ENCODE measurements at regions of chr2 and their contacts with region 1.

Region 1: DNA sequence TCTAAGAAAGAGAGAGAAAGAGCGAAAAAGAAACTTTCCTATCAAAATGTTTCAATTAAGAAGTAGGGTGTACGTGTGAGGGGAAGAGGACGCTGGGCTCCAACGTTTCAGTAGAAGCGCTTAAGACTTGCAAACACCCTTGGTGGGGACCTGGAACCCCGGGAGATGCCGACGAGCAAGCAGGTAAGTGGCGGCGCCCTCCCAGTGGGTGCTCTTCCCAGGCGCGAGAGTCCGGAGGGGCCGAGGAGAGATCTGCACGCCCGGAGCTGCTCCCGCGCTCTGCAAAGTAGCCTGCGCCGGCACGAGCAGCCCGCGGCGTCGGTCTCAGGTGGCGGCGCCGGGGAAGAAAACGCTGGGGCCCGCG is 678 bp upstream of the OTX1 start:
- DNase-seq: peak in 1 of 2 experiments; percentile 63
- H3K4me3 ChIP-seq: peak overlapping the region; percentile 66
- H3K4me1 ChIP-seq: peaks cover 7% of the 10 kb centered on the region
- H3K27me3 ChIP-seq: no peaks in the 10 kb centered on the region

Region 2: GRCh38 chr2:62456721-62457539 is 593.0 kb before region 1 on chr2:
- in situ Hi-C with region 1: loop called (anchors 25 kb)
- DNase-seq: peak; percentile 79 to 91
- H3K4me3 ChIP-seq: peak overlapping the region; percentile 29
- H3K4me1 ChIP-seq: peaks cover 17% of the 10 kb centered on the region
- H3K27me3 ChIP-seq: no peaks in the 10 kb centered on the region

Region 3: DNA sequence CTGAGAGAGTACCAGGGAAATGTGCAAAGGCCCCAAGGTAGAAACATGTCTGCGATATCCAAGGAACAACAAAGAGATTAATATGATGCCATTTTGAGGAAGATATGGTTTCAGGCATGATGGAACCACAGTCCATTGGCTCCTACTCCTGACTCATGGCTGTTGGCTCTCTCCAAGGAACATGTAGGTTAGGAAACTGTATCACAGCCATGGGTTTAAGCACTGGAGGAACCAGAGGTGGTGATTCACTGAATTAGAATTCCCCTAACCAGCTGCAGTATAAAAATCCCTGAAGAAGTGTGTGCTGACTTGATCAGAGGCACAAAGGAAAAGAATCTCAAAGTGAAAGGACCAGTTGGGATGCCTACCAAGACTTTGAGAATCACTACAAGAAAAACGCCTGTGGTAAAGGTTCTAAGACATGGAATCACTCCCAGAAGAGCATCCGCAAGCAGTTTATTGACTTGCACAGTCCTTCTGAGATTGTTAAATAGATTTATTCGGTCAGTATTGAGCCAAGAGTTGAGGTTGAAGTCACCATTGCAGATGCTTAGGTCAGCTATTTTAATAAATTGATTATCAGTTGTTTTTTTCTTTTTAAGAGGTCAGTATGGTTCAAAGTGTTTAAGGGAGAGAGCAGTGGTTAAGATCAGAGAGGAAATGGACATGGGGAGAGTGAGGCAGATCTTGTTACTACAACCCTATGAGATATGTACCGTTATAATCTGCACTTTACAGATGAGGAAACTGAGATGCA is 110.0 kb before region 1 on chr2:
- in situ Hi-C with region 1: no loop called
- DNase-seq: no peak
- H3K4me3 ChIP-seq: no peak overlapping the region
- H3K4me1 ChIP-seq: no peaks in the 10 kb centered on the region
- H3K27me3 ChIP-seq: no peaks in the 10 kb centered on the region

Region 4: GRCh38 chr2:63218800-63219526 is 169.0 kb after region 1 on chr2:
- in situ Hi-C with region 1: no loop called
- DNase-seq: peak; percentile 34 to 56
- H3K4me3 ChIP-seq: no peak overlapping the region
- H3K4me1 ChIP-seq: no peaks in the 10 kb centered on the region; the same call in 1 of the 2 replicates
- H3K27me3 ChIP-seq: no peaks in the 10 kb centered on the region

Measured in HAP-1 (cell line).